ENCODE measurements at regions of chr4 and their contacts with region 1.

Region 1: GRCh38 chr4:120855307-120856001 is 67.1 kb downstream of the PRDM5 start:
- DNase-seq: peak; percentile 13
- H3K4me3 Mint-ChIP-seq: no peak overlapping the region
- H3K27ac Mint-ChIP-seq: no peak overlapping the region
- H3K4me1 Mint-ChIP-seq: peaks cover 12% of the 10 kb centered on the region
- H3K27me3 Mint-ChIP-seq: no peaks in the 10 kb centered on the region

Region 2: DNA sequence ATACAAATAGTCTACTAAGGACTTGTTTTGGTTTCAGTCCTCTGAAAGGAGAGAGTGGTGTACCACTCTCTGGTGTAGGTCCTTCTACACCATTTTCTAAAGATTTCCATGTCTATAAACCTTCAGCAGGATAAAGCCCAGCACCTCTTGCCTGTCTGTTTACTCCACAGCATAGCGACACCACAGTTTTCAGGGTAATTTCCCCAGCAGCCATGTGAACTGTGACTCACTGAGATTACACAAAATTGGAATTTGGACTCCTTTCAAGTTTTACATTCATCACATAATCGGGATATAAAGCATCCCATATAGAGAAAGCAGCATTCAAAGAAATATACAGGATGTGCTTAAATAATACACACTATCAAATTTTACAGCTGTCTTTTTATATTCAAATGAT is 162.5 kb before region 1 on chr4:
- CTCF ChIA-PET with region 1: no interaction called
- intact Hi-C with region 1: no loop called
- DNase-seq: peak; percentile 14
- H3K4me3 Mint-ChIP-seq: no peak overlapping the region
- H3K27ac Mint-ChIP-seq: no peak overlapping the region
- H3K4me1 Mint-ChIP-seq: no peaks in the 10 kb centered on the region
- H3K27me3 Mint-ChIP-seq: peaks cover 2% of the 10 kb centered on the region

Region 3: DNA sequence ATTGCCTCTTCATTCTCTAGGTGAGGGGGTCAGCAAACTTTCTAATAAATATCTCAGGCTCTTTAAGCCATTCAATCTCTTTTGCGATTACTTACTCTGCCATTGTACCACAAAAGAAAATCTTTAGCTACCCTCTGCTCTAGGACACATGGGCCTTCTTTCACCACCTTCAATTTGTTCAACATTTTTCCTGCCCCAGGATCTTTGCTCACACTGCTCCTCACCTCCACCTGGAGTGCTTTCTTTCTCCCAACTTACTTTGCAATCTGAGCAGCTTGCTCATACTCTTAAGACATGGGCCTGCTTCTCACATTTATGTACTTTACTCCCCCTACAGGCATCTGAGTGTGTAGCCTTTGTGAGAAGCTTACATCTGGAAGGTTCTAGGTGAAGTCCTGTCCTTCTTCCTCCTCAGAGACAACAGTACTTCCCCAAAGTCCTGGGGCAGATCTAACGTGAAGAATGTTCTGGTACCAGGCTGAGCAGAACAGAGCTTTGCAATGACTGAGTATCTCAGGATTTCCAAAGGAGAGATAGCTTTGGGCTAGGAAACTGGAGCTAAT is 122.1 kb after region 1 on chr4:
- CTCF ChIA-PET with region 1: no interaction called
- intact Hi-C with region 1: loop called (anchors 5 kb)
- DNase-seq: peak; percentile 26
- H3K4me3 Mint-ChIP-seq: no peak overlapping the region
- H3K27ac Mint-ChIP-seq: no peak overlapping the region
- H3K4me1 Mint-ChIP-seq: no peaks in the 10 kb centered on the region
- H3K27me3 Mint-ChIP-seq: no peaks in the 10 kb centered on the region

Region 4: DNA sequence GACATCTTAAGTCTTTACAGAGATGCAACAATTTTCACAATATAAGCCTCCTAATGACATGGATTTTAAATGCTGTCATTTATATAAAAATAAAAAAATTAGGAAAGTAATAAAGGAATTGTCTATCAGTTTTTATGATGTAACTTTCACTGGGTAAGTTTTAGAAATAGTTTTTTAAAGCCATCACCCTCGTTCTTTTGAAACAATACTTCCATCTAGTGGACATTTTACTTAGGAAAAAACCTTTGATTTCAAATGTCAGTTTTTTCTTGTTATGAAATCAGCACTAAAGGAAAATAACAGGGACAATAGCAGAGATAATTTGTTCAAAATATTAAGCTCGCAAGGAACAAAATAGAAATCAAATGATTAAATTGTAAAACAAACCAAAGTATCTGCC is 241.2 kb after region 1 on chr4:
- CTCF ChIA-PET with region 1: no interaction called
- intact Hi-C with region 1: loop called (anchors 1 kb)
- DNase-seq: no peak
- H3K4me3 Mint-ChIP-seq: no peak overlapping the region
- H3K27ac Mint-ChIP-seq: no peak overlapping the region
- H3K4me1 Mint-ChIP-seq: no peaks in the 10 kb centered on the region
- H3K27me3 Mint-ChIP-seq: no peaks in the 10 kb centered on the region